PC-9 (cell line): ENCODE measurements at regions of chr3 and their contacts with region 1.

Region 1: DNA sequence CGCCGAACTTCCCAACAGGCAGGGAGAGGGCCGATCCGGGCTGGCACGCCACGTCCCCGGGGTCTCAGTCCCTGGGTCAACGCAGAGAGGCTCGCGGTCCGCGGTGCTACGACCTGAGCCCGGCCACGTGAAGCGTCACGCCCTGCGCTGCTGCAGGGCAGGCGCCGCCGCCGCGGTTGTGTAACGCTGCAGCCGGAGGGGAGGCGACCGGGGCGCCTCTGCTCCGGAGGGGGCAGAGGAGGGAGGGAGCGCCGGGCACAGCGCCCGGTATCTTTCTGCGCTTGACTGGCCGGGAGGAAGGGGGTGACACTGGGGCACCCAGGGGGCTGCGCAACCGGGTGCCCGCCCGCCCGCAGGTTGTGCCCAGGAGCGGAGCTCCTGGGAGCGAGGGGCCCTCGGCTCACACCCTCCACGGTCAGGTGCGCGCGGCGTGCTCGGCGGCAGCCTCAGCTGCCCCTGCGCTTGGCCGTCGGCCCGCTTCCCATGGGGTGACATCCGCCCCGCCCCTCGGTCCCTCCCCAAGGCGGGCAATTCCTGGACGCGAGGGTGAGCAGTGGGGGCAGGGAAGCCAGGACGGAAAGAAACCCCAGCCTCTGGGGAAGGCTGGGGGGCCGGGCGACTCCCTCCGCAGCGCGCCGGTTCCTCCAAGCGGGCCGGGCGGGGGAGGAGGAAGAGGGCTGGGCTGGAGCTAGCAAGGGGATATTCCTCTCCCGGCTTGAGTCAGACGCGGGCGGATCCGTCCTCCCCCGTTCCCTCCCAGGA is 852 bp upstream of the BHLHE40 start:
- DNase-seq: peak; percentile 85 to 99
- H3K4me3 ChIP-seq: peak overlapping the region; percentile 69
- H3K27ac ChIP-seq: peak overlapping the region; percentile 100
- H3K4me1 ChIP-seq: peaks cover 26% of the 10 kb centered on the region
- H3K27me3 ChIP-seq: no peaks in the 10 kb centered on the region
- CTCF ChIP-seq: no peak

Region 2: GRCh38 chr3:4722103-4722502 is 256.3 kb before region 1 on chr3:
- CTCF ChIA-PET with region 1: interaction called, 10 read pairs
- POLR2A ChIA-PET with region 1: interaction called, 13 read pairs
- intact Hi-C with region 1: loop called (anchors 1 kb)
- DNase-seq: peak in 1 of 2 experiments; percentile 25
- H3K4me3 ChIP-seq: no peak overlapping the region
- H3K27ac ChIP-seq: no peak overlapping the region; the same call in 1 of the 2 replicates
- H3K4me1 ChIP-seq: no peaks in the 10 kb centered on the region
- H3K27me3 ChIP-seq: no peaks in the 10 kb centered on the region
- CTCF ChIP-seq: peak; percentile 39; the same call in 1 of the 2 replicates

Region 3: GRCh38 chr3:4831580-4831950 is 146.8 kb before region 1 on chr3:
- CTCF ChIA-PET with region 1: no interaction called
- POLR2A ChIA-PET with region 1: interaction called, 24 read pairs
- intact Hi-C with region 1: loop called (anchors 1 kb)
- DNase-seq: no peak
- H3K4me3 ChIP-seq: peak overlapping the region; percentile 47; the same call in 1 of the 2 replicates
- H3K27ac ChIP-seq: peak overlapping the region; percentile 96
- H3K4me1 ChIP-seq: peaks cover 57% of the 10 kb centered on the region
- H3K27me3 ChIP-seq: no peaks in the 10 kb centered on the region
- CTCF ChIP-seq: no peak

Region 4: DNA sequence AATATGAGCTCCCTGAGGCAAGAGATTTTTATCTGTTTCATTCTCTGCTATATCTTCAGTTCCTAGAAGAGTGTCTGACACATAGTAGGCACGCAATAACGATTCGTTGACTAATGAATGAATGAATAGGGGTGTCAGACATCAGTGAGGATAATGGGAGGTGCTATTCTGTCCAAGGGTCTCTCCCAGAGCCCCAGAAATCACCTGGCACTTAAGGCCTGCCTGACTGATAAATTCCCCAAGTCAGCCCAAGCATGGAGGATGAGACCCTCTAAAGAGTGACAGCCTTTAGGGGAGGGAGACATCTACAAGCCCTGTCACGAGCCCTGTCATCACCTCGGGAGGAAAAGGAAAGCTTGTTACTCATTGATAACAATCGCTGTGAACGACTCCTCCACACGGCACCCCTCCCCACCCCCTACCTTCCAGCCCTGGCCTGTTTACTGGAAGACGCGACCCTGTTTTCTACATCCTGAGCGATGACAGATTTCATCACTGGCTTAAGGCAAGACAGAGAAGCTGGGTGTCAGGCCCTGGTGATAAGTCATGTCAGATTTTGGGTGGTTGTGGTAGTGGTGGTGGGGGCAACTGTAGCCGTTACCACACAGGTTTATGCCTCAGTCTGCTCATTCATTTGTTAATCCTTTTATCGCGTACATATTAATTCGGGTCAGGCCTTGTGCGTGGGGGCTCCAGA is 23.9 kb after region 1 on chr3:
- CTCF ChIA-PET with region 1: interaction called, 23 read pairs
- POLR2A ChIA-PET with region 1: no interaction called
- intact Hi-C with region 1: no loop called
- DNase-seq: no peak
- H3K4me3 ChIP-seq: no peak overlapping the region
- H3K27ac ChIP-seq: no peak overlapping the region
- H3K4me1 ChIP-seq: 0 out of 2 replicates have a peak, but pooled peaks cover 6% of the 10 kb centered on the region
- H3K27me3 ChIP-seq: no peaks in the 10 kb centered on the region
- CTCF ChIP-seq: no peak

Region 5: DNA sequence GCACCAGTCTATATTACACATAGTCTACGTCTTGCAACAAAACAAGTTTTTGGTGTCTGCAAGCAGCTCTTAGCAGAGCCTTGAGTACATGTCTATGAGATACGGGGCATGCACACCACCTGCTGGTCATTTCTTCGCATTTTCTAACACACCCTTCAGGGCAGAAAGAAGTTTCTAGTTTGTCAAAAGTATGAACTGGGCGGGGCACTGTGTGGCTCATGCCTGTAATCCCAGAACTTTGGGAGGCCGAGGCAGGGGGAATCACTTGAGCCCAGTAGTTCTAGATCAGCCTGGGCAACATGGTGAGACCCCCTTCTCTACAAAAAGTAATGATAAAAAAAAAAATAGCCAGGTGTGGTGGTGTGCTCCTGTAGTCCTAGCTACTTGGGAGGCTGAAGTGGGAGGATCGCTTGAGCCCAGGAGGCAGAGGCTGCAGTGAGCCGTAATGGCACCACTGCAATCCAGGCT is 79.5 kb after region 1 on chr3:
- CTCF ChIA-PET with region 1: interaction called, 4 read pairs
- POLR2A ChIA-PET with region 1: interaction called, 23 read pairs
- intact Hi-C with region 1: loop called (anchors 1 kb)
- DNase-seq: peak; percentile 71 to 74
- H3K4me3 ChIP-seq: no peak overlapping the region
- H3K27ac ChIP-seq: no peak overlapping the region
- H3K4me1 ChIP-seq: peaks cover 6% of the 10 kb centered on the region
- H3K27me3 ChIP-seq: no peaks in the 10 kb centered on the region
- CTCF ChIP-seq: peak; percentile 73

Region 6: DNA sequence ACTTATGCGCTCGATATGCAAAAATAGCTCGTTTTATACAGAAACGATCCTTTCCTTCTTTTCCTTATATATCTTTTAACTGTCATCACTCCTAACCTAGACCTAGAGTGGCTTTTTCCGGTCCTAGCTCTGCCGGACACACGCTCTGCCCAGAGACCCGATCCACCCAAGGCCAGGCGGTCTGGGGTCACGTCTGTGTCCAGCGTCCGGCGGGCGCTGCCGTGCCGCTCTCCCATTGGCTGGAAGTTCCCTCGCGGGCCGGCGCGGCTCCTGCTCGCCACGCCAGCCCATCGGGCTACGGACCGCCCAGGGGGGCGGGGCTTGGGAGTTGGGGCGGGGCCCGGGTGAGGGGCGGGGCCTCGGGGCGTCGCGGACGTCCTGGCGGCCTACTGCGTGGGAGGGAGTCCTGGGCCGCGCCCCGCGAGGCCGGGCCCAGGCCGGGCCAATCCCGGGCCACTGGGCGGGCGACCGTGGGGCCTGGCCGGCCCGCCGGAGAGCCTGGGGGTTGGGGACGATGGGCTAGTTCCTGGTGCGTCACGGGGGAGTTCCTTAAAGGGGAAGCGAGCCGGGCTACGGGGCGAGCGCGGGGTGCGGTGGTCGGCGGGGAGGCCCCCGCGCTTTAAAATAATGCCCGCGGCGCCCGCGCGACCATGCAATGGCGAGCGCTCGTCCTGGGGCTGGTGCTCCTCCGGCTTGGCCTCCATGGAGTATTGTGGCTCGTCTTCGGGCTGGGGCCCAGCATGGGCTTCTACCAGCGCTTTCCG is 209.0 kb after region 1 on chr3 and contains the start of gene EDEM1:
- CTCF ChIA-PET with region 1: no interaction called
- POLR2A ChIA-PET with region 1: interaction called, 7 read pairs
- intact Hi-C with region 1: loop called (anchors 5 kb)
- DNase-seq: peak; percentile 73 to 98
- H3K4me3 ChIP-seq: peak within 1 kb of the TSS; percentile 78
- H3K27ac ChIP-seq: peak within 1 kb of the TSS; percentile 73
- H3K4me1 ChIP-seq: peaks cover 22% of the 10 kb centered on the region
- H3K27me3 ChIP-seq: no peaks in the 10 kb centered on the region
- CTCF ChIP-seq: no peak
- total RNA-seq, gene EDEM1: 53.5 and 55.9 TPM in 2 replicates

Region 7: DNA sequence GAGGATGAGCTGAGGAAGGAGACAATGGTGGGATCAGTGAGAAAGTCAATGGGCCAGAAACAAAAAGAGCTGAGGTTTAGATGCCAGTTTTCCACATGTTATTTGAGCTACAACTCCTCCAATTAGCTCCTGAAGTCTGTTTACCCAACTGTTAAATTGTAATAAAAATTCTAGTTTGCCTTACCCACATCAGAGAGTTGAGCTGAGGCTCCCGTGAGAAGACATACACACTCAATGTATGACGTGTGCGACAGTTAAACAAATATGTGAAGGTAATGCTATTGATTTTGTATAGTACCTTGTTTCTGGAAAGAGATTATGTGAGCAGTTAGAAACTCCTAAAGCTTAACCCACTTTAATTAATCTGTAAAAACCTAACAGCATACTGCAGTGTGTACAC is 1564.4 kb after region 1 on chr3:
- CTCF ChIA-PET with region 1: no interaction called
- POLR2A ChIA-PET with region 1: interaction called, 14 read pairs
- intact Hi-C with region 1: no loop called
- DNase-seq: no peak
- H3K4me3 ChIP-seq: no peak overlapping the region
- H3K27ac ChIP-seq: no peak overlapping the region
- H3K4me1 ChIP-seq: no peaks in the 10 kb centered on the region
- H3K27me3 ChIP-seq: no peaks in the 10 kb centered on the region
- CTCF ChIP-seq: no peak